Gastrocnemius medialis (tissue), 4 donors: ENCODE measurements at regions of chr10 and their contacts with region 1.

Region 1: DNA sequence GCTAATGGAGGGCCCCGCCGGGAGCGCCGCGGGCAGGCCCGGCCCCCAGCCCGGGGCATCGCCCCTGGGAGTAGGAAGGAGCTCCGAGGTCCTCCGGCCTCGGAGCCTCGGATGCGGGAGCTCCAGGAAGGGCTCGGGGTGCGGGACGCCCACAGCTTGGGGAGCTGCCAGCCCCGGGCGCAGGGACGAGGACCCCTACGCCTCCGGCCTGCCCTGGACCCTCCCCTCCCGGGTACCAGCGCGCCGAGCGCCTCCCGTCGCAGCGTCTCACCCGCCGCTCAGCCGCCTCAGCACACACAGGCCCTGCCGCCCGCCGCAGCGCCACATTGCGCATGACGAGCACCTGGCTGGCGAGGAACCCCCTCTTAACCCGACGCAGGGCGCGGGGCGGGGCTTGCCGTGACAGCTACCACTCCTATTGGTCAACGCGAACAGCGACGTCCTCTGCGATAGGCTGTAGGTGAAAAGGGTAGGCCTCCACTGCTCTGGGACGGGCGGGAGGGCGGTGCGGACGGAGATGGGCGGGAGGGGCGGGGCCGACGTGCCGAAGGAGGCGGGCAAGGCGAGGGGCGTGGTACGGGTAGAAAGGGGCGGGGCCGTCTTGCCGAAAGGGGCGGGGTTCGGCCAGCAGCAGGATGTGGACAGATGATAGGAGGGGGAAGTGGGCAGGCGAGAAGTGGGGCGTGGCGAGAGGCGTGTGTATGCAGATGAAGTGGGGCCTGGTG is at the start of gene PITRM1:
- DNase-seq: peak; percentile 99
- ATAC-seq: peak; percentile 97 to 99
- H3K4me3 ChIP-seq: peak within 1 kb of the TSS; percentile 68 to 90 (median 80)
- H3K27ac ChIP-seq: peak within 1 kb of the TSS; percentile 85 to 95 (median 90)
- H3K4me1 ChIP-seq: peaks cover 6 to 8% of the 10 kb centered on the region in 2 donors
- H3K27me3 ChIP-seq: no peaks in the 10 kb centered on the region
- CTCF ChIP-seq: no peak
- POLR2A ChIP-seq: peak; percentile 99
- total RNA-seq, gene PITRM1: 81.9 to 123 (median 90.2) TPM

Region 2: DNA sequence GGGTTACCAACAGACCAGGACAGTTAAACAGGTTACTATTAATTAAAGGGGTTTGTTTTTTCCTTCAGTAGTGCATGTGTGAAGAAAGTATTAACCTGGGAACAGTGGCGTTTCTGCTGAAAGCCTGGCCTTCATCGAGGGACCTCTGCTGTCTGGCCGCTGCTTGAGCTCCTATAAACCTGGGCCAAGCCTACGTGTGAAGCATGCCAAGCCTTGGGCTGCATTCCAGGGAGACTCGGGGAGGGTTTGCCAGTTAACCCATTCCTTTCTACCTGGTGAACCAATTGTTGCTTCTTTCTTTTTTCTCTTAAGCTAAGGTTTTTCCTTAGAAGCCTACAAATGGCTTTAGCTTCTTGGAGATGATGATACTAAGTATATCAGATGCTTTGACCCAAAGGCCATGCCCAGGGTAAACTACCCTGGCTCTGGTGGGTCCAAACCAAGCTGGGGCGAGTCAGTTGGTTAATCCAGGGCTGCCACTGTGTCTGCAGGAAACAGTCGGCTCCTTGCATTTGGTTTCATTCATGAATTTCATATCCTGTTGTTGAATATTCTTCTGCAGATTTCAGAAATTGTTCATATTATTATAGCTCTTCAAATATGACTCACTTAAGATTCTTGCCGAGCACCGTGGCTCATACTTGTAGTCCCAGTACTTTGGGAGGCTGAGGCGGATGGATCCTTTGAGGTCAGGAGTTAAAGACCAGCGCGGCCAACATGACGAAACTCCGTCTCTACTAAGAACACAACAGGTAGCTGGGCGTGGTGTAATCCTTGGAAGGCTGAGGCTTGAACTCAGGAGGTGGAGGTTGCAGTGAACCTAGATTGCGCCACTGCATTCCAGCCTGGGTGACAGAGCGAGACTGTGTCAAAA is 81.5 kb before region 1 on chr10:
- in situ Hi-C with region 1: no loop called
- intact Hi-C with region 1: no loop called
- DNase-seq: no peak
- ATAC-seq: peak in 1 of 2 donors; percentile 38
- H3K4me3 ChIP-seq: no peak overlapping the region
- H3K27ac ChIP-seq: no peak overlapping the region
- H3K4me1 ChIP-seq: peaks cover 0 to 22% of the 10 kb centered on the region in 2 donors
- H3K27me3 ChIP-seq: no peaks in the 10 kb centered on the region
- CTCF ChIP-seq: no peak
- POLR2A ChIP-seq: no peak

Region 3: DNA sequence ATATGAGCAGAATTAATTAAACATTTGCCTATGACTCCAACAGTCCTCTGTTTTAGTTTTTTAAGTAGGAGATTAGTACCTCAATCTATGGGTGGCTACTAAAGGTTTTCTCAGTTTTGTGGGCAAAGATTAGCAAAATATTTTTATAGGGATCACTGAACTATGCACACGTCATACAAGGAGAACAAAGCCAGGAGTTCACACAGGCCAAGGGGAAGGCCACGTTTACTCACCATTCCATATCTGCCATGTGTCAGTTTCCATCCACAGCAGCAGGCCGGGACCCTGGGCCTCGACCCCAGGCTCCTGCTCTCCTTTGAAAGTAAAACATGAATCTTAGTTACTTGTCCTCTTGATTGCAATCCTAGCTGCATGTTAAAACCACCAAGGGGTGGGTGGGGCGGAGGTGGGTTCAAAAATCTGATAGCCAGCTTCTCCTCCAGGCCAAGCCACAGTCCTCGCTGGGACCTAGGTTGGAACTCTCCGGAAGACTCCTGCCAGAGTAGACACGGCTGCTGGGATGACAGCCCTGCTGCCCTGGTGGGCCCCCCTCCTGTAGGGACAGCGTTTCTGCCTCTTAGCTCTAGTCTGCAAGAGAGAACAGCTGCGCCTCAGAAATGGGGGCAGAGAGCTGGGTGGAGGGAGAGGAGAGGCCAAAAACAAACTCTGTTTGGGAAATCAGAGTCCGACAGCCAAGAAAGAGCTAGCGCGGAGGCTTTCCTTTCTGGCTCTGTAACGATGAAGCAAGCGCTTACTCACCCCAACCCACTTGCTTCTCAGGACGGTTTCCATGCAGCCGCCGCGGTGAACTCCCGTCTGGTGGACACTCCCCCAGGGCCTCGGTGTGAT is 35.6 kb before region 1 on chr10:
- in situ Hi-C with region 1: no loop called
- intact Hi-C with region 1: loop called (anchors 1 kb)
- DNase-seq: peak; percentile 68 to 94
- ATAC-seq: peak; percentile 90 to 95
- H3K4me3 ChIP-seq: peak overlapping the region; percentile 5 to 26 (median 15)
- H3K27ac ChIP-seq: peak overlapping the region; percentile 81 to 94 (median 87)
- H3K4me1 ChIP-seq: peaks cover 21 to 22% of the 10 kb centered on the region in 2 donors
- H3K27me3 ChIP-seq: no peaks in the 10 kb centered on the region
- CTCF ChIP-seq: no peak
- POLR2A ChIP-seq: peak in 1 of 2 donors; percentile 36